Gastrocnemius medialis (tissue), 4 donors: ENCODE measurements at regions of chr6 and their contacts with region 1.

Region 1: GRCh38 chr6:46090115-46091079 is 39.4 kb upstream of the ENPP4 start:
- DNase-seq: peak; percentile 44 to 52
- ATAC-seq: peak; percentile 81 to 87
- H3K4me3 ChIP-seq: no peak overlapping the region
- H3K27ac ChIP-seq: no peak overlapping the region
- H3K4me1 ChIP-seq: peaks cover 0 to 3% of the 10 kb centered on the region in 2 donors
- H3K27me3 ChIP-seq: no peaks in the 10 kb centered on the region
- CTCF ChIP-seq: peak; percentile 68 to 88 (median 80)
- POLR2A ChIP-seq: no peak

Region 2: DNA sequence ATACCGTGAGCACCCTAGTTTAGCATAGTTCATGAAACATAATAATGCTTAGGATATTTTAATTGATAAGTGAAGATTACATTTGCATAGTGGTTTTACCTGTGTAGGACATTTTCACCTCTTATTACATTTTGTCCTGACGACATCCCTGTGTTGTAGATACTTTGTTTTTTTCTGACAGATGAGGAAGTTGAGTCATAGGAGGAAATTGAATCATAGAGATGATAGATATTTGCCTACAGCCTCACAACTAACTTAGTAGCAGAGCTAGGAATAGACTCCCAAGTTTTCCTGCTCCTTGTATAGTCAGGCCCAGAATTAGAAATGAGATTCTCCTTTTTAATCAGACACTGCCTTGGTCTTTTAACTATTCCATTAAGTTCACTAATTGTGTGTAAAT is 612.2 kb before region 1 on chr6:
- in situ Hi-C with region 1: no loop called
- intact Hi-C with region 1: no loop called
- DNase-seq: no peak
- ATAC-seq: no peak
- H3K4me3 ChIP-seq: no peak overlapping the region
- H3K27ac ChIP-seq: no peak overlapping the region
- H3K4me1 ChIP-seq: peaks cover 9 to 10% of the 10 kb centered on the region in 2 donors
- H3K27me3 ChIP-seq: no peaks in the 10 kb centered on the region
- CTCF ChIP-seq: no peak
- POLR2A ChIP-seq: no peak

Region 3: GRCh38 chr6:45930420-45931040 is 159.9 kb before region 1 on chr6:
- in situ Hi-C with region 1: no loop called
- intact Hi-C with region 1: loop called (anchors 1 kb)
- DNase-seq: peak; percentile 53 to 81
- ATAC-seq: peak; percentile 87 to 94
- H3K4me3 ChIP-seq: no peak overlapping the region
- H3K27ac ChIP-seq: peak overlapping the region; percentile 1 to 62 (median 52)
- H3K4me1 ChIP-seq: peaks cover 13 to 20% of the 10 kb centered on the region in 2 donors
- H3K27me3 ChIP-seq: no peaks in the 10 kb centered on the region
- CTCF ChIP-seq: peak; percentile 94 to 98 (median 95)
- POLR2A ChIP-seq: no peak

Region 4: GRCh38 chr6:46129629-46130511 is 39.5 kb after region 1 on chr6 and contains the start of gene ENPP4:
- in situ Hi-C with region 1: no loop called
- intact Hi-C with region 1: loop called (anchors 5 kb)
- DNase-seq: peak; percentile 78 to 92
- ATAC-seq: peak; percentile 95 to 97
- H3K4me3 ChIP-seq: peak within 1 kb of the TSS; percentile 72 to 97 (median 88)
- H3K27ac ChIP-seq: peak within 1 kb of the TSS; percentile 89 to 92 (median 91)
- H3K4me1 ChIP-seq: peaks cover 28 to 29% of the 10 kb centered on the region in 2 donors
- H3K27me3 ChIP-seq: no peaks in the 10 kb centered on the region
- CTCF ChIP-seq: no peak
- POLR2A ChIP-seq: peak; percentile 93 to 96
- total RNA-seq, gene ENPP4: 25.1 to 41.8 (median 33.1) TPM

Region 5: GRCh38 chr6:46160102-46160501 is 69.7 kb after region 1 on chr6:
- in situ Hi-C with region 1: no loop called
- intact Hi-C with region 1: no loop called
- DNase-seq: no peak
- ATAC-seq: no peak
- H3K4me3 ChIP-seq: no peak overlapping the region
- H3K27ac ChIP-seq: no peak overlapping the region
- H3K4me1 ChIP-seq: no peaks in the 10 kb centered on the region
- H3K27me3 ChIP-seq: no peaks in the 10 kb centered on the region
- CTCF ChIP-seq: no peak
- POLR2A ChIP-seq: no peak

Region 6: GRCh38 chr6:46221222-46221793 is 130.9 kb after region 1 on chr6:
- in situ Hi-C with region 1: loop called in 1 of 4 experiments (anchors 10 kb)
- intact Hi-C with region 1: loop called (anchors 5 kb)
- DNase-seq: no peak
- ATAC-seq: peak; percentile 50 to 61
- H3K4me3 ChIP-seq: no peak overlapping the region
- H3K27ac ChIP-seq: no peak overlapping the region
- H3K4me1 ChIP-seq: peaks cover 5 to 21% of the 10 kb centered on the region in 2 donors
- H3K27me3 ChIP-seq: no peaks in the 10 kb centered on the region
- CTCF ChIP-seq: peak; percentile 62 to 90 (median 84)
- POLR2A ChIP-seq: no peak

Region 7: DNA sequence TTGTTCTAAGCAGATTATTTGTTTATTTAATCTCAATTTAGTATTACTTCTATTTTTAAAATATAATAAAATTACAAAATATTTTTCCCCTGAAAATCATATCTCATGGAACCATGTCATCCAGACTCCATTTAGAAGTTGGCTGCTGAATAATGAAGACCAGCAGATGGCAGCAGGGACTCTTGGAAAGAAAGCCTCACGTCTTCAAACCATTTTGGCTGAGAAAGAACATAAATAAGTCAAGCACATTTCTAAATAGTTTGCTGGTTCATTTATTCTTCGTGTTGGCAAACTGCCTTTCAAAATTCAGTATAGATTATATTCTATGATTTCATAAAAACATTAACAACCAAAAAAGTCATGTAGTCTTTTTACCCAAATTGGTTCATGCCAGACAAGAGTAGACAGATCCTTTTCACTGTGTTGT is 329.2 kb after region 1 on chr6:
- in situ Hi-C with region 1: loop called in 1 of 4 experiments (anchors 5 kb)
- intact Hi-C with region 1: loop called (anchors 2 kb)
- DNase-seq: peak; percentile 30 to 62
- ATAC-seq: peak; percentile 63 to 68
- H3K4me3 ChIP-seq: no peak overlapping the region
- H3K27ac ChIP-seq: peak overlapping the region in 3 of 4 donors; percentile 9 to 65 (median 54)
- H3K4me1 ChIP-seq: peaks cover 4 to 35% of the 10 kb centered on the region in 2 donors
- H3K27me3 ChIP-seq: no peaks in the 10 kb centered on the region
- CTCF ChIP-seq: peak; percentile 69 to 84 (median 78)
- POLR2A ChIP-seq: no peak

Region 8: GRCh38 chr6:46606338-46606737 is 515.9 kb after region 1 on chr6:
- in situ Hi-C with region 1: loop called in 2 of 4 experiments (anchors 25 kb)
- intact Hi-C with region 1: no loop called
- DNase-seq: no peak
- ATAC-seq: no peak
- H3K4me3 ChIP-seq: no peak overlapping the region
- H3K27ac ChIP-seq: no peak overlapping the region
- H3K4me1 ChIP-seq: peaks cover 3 to 11% of the 10 kb centered on the region in 2 donors
- H3K27me3 ChIP-seq: no peaks in the 10 kb centered on the region
- CTCF ChIP-seq: no peak
- POLR2A ChIP-seq: no peak

Region 9: DNA sequence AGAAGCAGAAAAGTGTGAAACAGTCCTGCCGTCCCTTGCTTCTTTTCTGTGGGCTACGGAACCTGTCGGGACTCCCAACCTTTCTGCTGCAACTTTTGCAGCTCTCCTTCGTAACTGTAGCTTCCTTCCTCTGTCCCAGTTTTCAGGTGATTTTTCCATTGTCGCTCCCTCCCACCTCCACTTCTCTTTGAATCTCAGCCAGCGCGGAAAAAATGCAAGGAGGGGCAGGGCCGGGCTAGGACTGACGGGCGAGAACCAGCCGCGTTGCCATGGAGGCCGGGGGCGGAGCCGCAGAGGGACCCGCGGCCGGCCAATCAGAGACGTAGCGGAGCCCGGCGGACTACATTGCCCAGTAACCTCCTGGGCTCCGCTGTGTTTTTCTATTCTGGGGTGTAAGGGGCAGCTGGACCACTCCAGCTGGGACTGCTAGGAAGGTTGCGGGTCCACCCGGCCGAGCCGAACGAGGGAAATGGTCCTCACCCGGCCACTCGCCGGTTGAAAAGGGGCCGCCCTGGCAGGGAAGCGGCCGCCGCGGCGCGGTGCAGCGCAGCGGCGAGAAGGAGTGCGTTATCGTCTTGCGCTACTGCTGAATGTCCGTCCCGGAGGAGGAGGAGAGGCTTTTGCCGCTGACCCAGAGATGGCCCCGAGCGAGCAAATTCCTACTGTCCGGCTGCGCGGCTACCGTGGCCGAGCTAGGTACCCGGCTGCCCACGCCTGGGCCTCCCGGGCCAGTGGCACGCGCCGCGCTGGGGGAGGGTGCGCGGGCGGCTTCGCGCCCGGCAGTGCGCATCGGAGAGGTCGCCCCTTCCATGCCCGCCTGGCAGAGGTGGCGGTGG is 562.4 kb after region 1 on chr6 and contains the starts of genes CYP39A1 and SLC25A27:
- in situ Hi-C with region 1: no loop called
- intact Hi-C with region 1: loop called (anchors 10 kb)
- DNase-seq: peak; percentile 87 to 90
- ATAC-seq: peak; percentile 99
- H3K4me3 ChIP-seq: peak within 1 kb of the TSS; percentile 77 to 97 (median 88)
- H3K27ac ChIP-seq: peak within 1 kb of the TSS; percentile 87 to 97 (median 93)
- H3K4me1 ChIP-seq: peaks cover 25% of the 10 kb centered on the region in 2 donors
- H3K27me3 ChIP-seq: no peaks in the 10 kb centered on the region
- CTCF ChIP-seq: peak in 1 of 5 experiments; percentile 18
- POLR2A ChIP-seq: peak; percentile 60 to 83
- total RNA-seq, gene CYP39A1: 0.24 to 3.8 (median 1.0) TPM
- total RNA-seq, gene SLC25A27: 0.56 to 24.2 (median 6.5) TPM